H1 (cell line): ENCODE measurements at regions of chr19 and their contacts with region 1.

Region 1: DNA sequence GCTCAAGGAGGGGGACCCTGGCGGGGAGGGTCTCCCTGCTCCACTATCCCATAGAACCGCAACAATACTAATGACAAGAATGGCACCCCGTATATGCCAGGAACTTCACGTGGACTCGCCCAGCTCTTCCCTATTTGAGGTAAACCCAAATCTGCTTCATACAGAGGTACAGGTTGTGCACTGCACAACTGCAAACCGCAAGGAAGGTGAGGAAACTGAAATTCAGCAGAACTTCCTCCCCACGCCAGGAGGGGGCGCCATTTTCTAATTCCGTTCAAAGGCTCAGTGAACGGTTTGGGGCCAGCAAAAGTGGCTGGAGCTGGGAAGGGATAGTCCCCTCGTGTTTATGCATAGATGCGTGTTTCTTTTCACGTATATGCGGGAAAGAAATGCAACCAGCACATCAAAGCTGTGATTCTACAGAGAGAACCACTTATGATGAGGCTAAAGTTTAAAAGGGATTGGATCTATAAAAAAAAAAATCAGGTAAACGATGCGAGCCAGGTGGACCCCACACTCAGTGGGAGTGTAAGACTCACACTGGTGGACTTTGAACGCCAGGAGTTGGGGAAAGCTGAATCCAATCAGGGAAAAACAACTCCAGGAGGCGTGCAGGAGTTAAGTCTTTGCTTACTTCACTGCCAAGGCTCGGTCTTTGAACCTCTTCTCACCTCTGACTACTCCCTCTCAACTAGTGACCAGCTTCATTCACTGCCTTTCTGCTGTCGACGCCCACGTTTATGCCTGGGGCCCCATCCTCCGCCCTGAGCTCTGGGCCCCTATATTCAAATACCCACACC is 20.3 kb downstream of the C19orf81 start:
- DNase-seq: peak in 1 of 2 experiments; percentile 67
- H3K4me3 ChIP-seq: no peak overlapping the region
- H3K27ac ChIP-seq: no peak overlapping the region
- H3K4me1 ChIP-seq: peaks cover 0 to 8% (median 4%) of the 10 kb centered on the region in 4 experiments; a peak in 5 of 7 replicates
- H3K27me3 ChIP-seq: peaks cover 27 to 46% (median 42%) of the 10 kb centered on the region in 4 experiments
- CTCF ChIP-seq: peak; percentile 58 to 83 (median 68)
- EP300 ChIP-seq: no peak
- POLR2A ChIP-seq: no peak
- RAD21 ChIP-seq: peak; percentile 45 to 49

Region 2: GRCh38 chr19:50649433-50650391 is 19.8 kb before region 1 on chr19 and contains the start of gene C19orf81:
- CTCF ChIA-PET with region 1: interaction called, 11 read pairs
- POLR2A ChIA-PET with region 1: no interaction called
- DNase-seq: peak in 1 of 2 experiments; percentile 79
- H3K4me3 ChIP-seq: peak within 1 kb of the TSS; percentile 19 to 53 (median 34); a peak in 5 of 8 replicates
- H3K27ac ChIP-seq: no peak within 1 kb of the TSS
- H3K4me1 ChIP-seq: peaks cover 0 to 10% (median 5%) of the 10 kb centered on the region in 4 experiments; a peak in 6 of 7 replicates
- H3K27me3 ChIP-seq: peaks cover 0 to 15% (median 10%) of the 10 kb centered on the region in 4 experiments; a peak in 5 of 7 replicates
- CTCF ChIP-seq: peak in 2 of 3 experiments; percentile 2 to 30; a peak in 2 of 4 replicates
- EP300 ChIP-seq: no peak
- POLR2A ChIP-seq: no peak
- RAD21 ChIP-seq: no peak
- total RNA-seq, gene C19orf81: 11.7 and 14.2 TPM in 2 replicates

Region 3: GRCh38 chr19:50695251-50696093 is 26.0 kb after region 1 on chr19:
- CTCF ChIA-PET with region 1: interaction called, 10 read pairs
- POLR2A ChIA-PET with region 1: interaction called, 3 read pairs
- DNase-seq: peak in 1 of 2 experiments; percentile 82
- H3K4me3 ChIP-seq: peak overlapping the region; percentile 43 to 60 (median 48)
- H3K27ac ChIP-seq: no peak overlapping the region
- H3K4me1 ChIP-seq: peaks cover 0 to 24% (median 21%) of the 10 kb centered on the region in 4 experiments; a peak in 6 of 7 replicates
- H3K27me3 ChIP-seq: peaks cover 9 to 77% (median 70%) of the 10 kb centered on the region in 4 experiments
- CTCF ChIP-seq: no peak
- EP300 ChIP-seq: no peak
- POLR2A ChIP-seq: no peak
- RAD21 ChIP-seq: no peak

Region 4: GRCh38 chr19:50705422-50706019 is 36.0 kb after region 1 on chr19:
- CTCF ChIA-PET with region 1: interaction called, 28 read pairs
- POLR2A ChIA-PET with region 1: interaction called, 3 read pairs
- DNase-seq: peak in 1 of 2 experiments; percentile 67
- H3K4me3 ChIP-seq: no peak overlapping the region
- H3K27ac ChIP-seq: no peak overlapping the region
- H3K4me1 ChIP-seq: peaks cover 0 to 3% (median under 1%) of the 10 kb centered on the region in 4 experiments; a peak in 5 of 7 replicates
- H3K27me3 ChIP-seq: peaks cover 0 to 10% (median 5%) of the 10 kb centered on the region in 4 experiments; a peak in 4 of 7 replicates
- CTCF ChIP-seq: peak; percentile 73 to 85 (median 80)
- EP300 ChIP-seq: no peak
- POLR2A ChIP-seq: no peak
- RAD21 ChIP-seq: peak; percentile 83 to 88

Region 5: DNA sequence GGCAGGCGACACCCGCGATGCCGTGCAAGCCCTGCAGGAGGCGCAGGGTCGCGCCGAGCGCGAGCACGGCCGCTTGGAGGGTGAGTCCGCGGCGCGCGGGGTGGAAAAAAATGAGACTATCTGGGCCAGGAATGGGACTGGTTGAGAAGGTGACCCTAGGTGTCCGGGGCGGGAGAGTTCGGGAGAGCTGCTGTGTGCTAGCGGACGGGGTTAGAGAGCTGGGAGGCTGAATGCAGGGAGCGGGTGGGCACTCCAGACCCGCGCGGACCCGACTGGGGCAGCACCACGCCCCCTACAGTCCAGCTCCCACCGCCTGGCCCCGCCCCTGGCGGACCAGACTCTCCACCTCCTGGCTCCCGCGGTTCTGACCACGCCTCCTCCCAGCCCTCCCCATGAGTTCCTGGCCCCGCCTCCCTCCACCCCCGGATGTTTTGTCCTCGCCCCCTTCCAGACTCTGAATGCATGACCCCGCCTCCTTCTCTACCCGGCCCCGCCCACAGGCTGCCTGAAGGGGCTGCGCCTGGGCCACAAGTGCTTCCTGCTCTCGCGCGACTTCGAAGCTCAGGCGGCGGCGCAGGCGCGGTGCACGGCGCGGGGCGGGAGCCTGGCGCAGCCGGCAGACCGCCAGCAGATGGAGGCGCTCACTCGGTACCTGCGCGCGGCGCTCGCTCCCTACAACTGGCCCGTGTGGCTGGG is 55.2 kb after region 1 on chr19:
- CTCF ChIA-PET with region 1: interaction called, 13 read pairs
- POLR2A ChIA-PET with region 1: interaction called, 3 read pairs
- DNase-seq: peak; percentile 99
- H3K4me3 ChIP-seq: peak overlapping the region; percentile 68 to 82 (median 74)
- H3K27ac ChIP-seq: peak overlapping the region; percentile 20; the same call in 1 of the 2 replicates
- H3K4me1 ChIP-seq: peaks cover 3 to 39% (median 26%) of the 10 kb centered on the region in 4 experiments
- H3K27me3 ChIP-seq: peaks cover 4 to 39% (median 26%) of the 10 kb centered on the region in 4 experiments
- CTCF ChIP-seq: peak; percentile 63 to 80 (median 75)
- EP300 ChIP-seq: no peak
- POLR2A ChIP-seq: peak in 1 of 2 experiments; percentile 93; a peak in 2 of 3 replicates
- RAD21 ChIP-seq: peak; percentile 47 to 61

Region 6: GRCh38 chr19:50759886-50760285 is 90.4 kb after region 1 on chr19:
- CTCF ChIA-PET with region 1: no interaction called
- POLR2A ChIA-PET with region 1: no interaction called
- DNase-seq: no peak
- H3K4me3 ChIP-seq: no peak overlapping the region
- H3K27ac ChIP-seq: no peak overlapping the region
- H3K4me1 ChIP-seq: no peaks in the 10 kb centered on the region
- H3K27me3 ChIP-seq: peaks cover 0 to under 1% (median 0%) of the 10 kb centered on the region in 4 experiments; a peak in 1 of 7 replicates
- CTCF ChIP-seq: no peak
- EP300 ChIP-seq: no peak
- POLR2A ChIP-seq: no peak
- RAD21 ChIP-seq: no peak

Region 7: DNA sequence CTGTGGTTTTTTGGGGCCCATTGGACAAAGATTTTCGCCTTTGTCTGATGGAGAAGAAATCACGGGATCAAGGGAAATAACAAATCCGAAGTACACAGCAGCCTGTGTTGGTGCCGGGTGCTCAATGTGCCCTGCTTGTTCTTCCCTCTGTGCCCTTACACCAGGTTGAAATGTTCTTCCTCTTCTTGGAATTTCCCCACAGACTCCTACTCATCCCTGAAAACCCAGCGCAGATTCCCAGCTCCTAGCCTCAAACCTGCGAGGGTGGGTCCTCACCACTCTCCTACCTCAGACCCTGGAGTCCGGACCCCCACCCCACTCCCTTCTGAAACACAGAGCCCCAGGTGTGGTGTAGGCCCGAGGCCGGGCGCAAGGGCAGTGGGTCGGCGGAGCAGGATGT is 115.8 kb after region 1 on chr19:
- CTCF ChIA-PET with region 1: interaction called, 10 read pairs
- POLR2A ChIA-PET with region 1: no interaction called
- DNase-seq: no peak
- H3K4me3 ChIP-seq: no peak overlapping the region
- H3K27ac ChIP-seq: no peak overlapping the region
- H3K4me1 ChIP-seq: no peaks in the 10 kb centered on the region
- H3K27me3 ChIP-seq: peaks cover 0 to 11% (median 5%) of the 10 kb centered on the region in 4 experiments; a peak in 3 of 7 replicates
- CTCF ChIP-seq: no peak
- EP300 ChIP-seq: no peak
- POLR2A ChIP-seq: no peak
- RAD21 ChIP-seq: no peak